Activated CD4-positive, alpha-beta T cell treated with anti-CD3 and anti-CD28 coated beads for 36 hours (primary cell): ENCODE measurements at regions of chr5 and their contacts with region 1.

Region 1: GRCh38 chr5:98827161-98827560 is 53.7 kb downstream of the RGMB start:
- DNase-seq: no peak
- ATAC-seq: no peak
- H3K4me3 Mint-ChIP-seq: no peak overlapping the region
- H3K27ac Mint-ChIP-seq: no peak overlapping the region
- H3K4me1 Mint-ChIP-seq: no peaks in the 10 kb centered on the region
- H3K27me3 Mint-ChIP-seq: no peaks in the 10 kb centered on the region

Region 2: DNA sequence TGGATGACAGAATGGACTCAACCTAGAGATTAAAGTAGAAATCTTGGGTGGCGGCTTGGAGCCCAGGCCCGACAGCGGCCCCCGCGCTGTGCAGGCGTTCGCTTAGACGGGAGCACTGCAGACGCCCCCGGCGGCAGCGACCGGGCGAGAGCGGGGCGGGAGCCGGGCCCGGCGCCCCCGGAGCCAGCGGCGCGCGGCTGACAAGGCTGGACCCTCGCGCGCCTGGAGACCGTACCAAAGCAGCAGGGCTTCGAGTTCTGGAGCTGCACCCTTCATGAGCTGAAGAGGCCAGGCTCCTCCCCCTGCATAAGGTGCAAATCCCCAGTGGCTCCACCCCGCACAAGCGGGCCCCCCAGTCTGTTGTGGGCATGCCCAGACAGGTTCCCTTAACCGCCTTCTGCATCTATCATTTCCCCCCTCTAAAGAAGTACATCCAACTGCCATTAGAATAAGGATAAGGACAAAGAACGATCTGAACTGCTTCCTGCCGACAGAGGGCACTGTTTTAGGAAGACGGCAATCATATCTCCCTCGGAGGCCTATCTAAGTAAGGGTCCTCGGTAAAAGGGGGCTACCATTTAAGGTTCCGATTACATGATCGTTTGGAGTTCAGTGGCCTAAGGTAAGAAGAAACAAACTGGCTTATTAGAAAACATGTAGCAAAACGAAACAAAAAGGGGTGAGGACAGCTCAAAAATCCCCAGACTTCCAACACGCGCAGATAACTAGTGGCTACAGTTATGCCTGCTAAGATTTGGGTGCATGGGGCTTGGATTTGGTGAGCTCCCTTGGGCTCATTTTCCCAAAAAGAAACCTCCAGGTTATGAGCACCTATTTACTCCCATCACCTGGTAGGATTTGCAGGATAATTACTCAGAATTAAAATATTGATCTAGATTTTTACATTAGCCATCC is 12.6 kb after region 1 on chr5:
- CTCF ChIA-PET with region 1: interaction called, 11 read pairs
- POLR2A ChIA-PET with region 1: no interaction called
- intact Hi-C with region 1: no loop called
- DNase-seq: peak; percentile 43
- ATAC-seq: peak; percentile 68
- H3K4me3 Mint-ChIP-seq: peak overlapping the region; percentile 5
- H3K27ac Mint-ChIP-seq: no peak overlapping the region
- H3K4me1 Mint-ChIP-seq: peaks cover 3% of the 10 kb centered on the region
- H3K27me3 Mint-ChIP-seq: no peaks in the 10 kb centered on the region